MCF 10A (cell line): ENCODE measurements at regions of chr4 and their contacts with region 1.

Region 1: DNA sequence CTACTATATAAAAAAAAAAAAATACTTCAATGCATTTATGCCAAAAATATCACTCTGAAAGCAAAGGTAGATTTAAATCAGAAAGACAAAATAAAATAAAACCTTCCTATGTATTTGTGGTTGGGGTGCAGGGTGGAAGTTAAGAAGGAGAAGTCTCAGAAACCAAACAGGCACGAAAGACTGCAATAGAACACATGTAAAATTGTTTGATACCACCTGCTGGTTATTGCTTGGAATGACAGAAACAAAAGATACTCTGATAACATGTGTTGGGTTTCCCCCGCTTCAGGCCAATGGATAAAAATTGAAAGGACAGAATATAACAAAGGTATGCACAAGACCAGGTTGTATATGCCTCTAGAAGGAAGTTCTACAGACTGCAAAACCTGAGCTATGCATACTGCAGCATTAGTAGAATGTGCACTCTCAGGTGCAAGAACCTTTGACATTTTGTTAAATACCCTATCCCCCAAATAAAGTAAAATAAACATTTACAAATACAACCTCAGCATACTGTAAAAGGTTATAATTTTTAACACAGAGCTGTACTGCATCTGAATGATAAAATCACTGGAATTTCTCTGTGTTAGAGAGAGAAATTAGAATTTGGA is 118.8 kb downstream of the GABRA2 start:
- DNase-seq: peak; percentile 59
- H3K4me3 Mint-ChIP-seq: no peak overlapping the region
- H3K27ac Mint-ChIP-seq: no peak overlapping the region
- H3K4me1 Mint-ChIP-seq: no peaks in the 10 kb centered on the region
- H3K27me3 Mint-ChIP-seq: no peaks in the 10 kb centered on the region
- CTCF ChIP-seq: peak; percentile 58

Region 2: DNA sequence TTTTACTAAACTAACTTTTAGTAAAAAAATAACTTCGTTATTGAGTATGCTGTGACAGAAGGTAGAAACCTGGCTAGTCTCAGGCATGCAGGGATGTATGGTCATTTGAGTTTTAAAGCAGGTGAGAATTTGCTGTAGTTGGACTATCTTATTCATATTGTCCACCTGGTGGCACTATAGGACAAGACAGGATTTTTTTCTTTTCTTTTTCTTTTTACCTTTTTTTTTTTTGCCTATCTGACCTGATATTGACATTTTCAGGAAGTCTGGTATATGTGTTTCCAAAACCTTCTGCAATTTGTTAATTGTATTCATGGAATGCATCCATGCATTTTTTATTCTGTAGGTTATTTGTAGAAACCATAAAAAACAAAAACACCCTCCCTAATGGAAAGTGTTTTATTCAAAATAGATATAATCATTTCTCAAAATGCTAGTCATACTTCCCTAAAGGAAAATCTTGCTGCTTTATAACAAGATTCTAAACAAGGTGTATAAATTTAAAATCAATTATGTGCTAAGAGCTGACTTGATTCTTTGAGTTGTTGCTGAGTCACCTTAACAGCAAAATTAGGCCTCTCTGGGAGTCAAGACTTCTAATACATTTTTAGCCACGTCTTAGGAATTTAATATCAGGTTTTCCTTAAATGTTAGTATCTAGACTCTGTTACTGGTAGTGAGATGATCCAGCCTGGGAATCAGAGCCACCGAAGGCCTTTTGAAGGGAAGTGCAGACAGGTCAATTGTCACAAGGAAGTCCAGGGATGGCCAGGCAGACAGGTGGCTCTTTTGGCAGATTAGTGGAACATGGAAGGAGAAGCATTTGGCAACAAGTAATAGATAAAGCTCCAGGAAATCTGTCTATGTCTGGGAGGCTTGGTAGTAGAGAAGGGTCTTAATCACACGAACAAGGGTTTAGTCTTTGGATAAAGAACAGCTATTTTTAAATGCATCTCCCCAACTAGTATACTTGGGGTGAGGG is 1343.4 kb before region 1 on chr4:
- CTCF ChIA-PET with region 1: interaction called, 16 read pairs
- POLR2A ChIA-PET with region 1: no interaction called
- intact Hi-C with region 1: loop called (anchors 2 kb)
- DNase-seq: peak; percentile 66
- H3K4me3 Mint-ChIP-seq: no peak overlapping the region
- H3K27ac Mint-ChIP-seq: no peak overlapping the region
- H3K4me1 Mint-ChIP-seq: no peaks in the 10 kb centered on the region
- H3K27me3 Mint-ChIP-seq: no peaks in the 10 kb centered on the region
- CTCF ChIP-seq: peak; percentile 60

Region 3: DNA sequence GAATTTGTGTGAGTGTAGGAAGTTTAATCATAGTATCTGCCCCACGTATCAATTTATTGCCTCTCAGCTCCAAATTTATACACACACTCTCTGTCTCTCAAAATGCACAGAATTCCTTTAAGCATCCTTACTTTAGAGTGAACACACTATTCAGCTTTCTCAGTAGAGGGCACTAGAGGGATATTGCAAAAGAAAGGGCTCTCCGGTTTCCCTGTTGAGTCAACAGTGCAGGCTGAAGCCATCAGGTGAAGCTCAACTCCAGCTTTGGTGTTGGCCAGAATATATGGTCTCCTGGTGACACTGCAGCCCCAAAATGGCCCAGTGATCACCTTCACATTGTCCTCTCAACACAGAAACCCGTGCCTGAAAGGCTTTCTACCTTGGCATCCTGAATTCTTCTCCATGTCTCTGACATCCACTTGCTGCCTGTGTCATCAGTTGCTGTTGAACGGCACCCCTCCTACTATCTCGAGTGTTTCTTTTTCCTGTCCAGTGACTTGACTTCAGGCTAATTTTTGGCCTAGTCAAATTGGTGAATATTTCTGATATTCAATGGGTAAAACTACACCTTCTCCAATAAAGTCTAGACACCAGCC is 817.7 kb before region 1 on chr4:
- CTCF ChIA-PET with region 1: interaction called, 18 read pairs
- POLR2A ChIA-PET with region 1: no interaction called
- intact Hi-C with region 1: loop called (anchors 1 kb)
- DNase-seq: peak; percentile 72
- H3K4me3 Mint-ChIP-seq: no peak overlapping the region
- H3K27ac Mint-ChIP-seq: no peak overlapping the region
- H3K4me1 Mint-ChIP-seq: no peaks in the 10 kb centered on the region
- H3K27me3 Mint-ChIP-seq: no peaks in the 10 kb centered on the region
- CTCF ChIP-seq: peak; percentile 59

Region 4: GRCh38 chr4:45550766-45551366 is 720.2 kb before region 1 on chr4:
- CTCF ChIA-PET with region 1: interaction called, 33 read pairs
- POLR2A ChIA-PET with region 1: interaction called, 3 read pairs
- intact Hi-C with region 1: loop called (anchors 1 kb)
- DNase-seq: peak; percentile 32
- H3K4me3 Mint-ChIP-seq: no peak overlapping the region
- H3K27ac Mint-ChIP-seq: peak overlapping the region; percentile 20
- H3K4me1 Mint-ChIP-seq: peaks cover 4% of the 10 kb centered on the region
- H3K27me3 Mint-ChIP-seq: no peaks in the 10 kb centered on the region
- CTCF ChIP-seq: peak; percentile 32

Region 5: GRCh38 chr4:45693746-45694145 is 577.3 kb before region 1 on chr4:
- CTCF ChIA-PET with region 1: interaction called, 6 read pairs
- POLR2A ChIA-PET with region 1: interaction called, 3 read pairs
- intact Hi-C with region 1: loop called (anchors 2 kb)
- DNase-seq: peak; percentile 76
- H3K4me3 Mint-ChIP-seq: peak overlapping the region; percentile 26
- H3K27ac Mint-ChIP-seq: peak overlapping the region; percentile 86
- H3K4me1 Mint-ChIP-seq: peaks cover 7% of the 10 kb centered on the region
- H3K27me3 Mint-ChIP-seq: no peaks in the 10 kb centered on the region
- CTCF ChIP-seq: no peak

Region 6: GRCh38 chr4:46254788-46255187 is 16.3 kb before region 1 on chr4:
- CTCF ChIA-PET with region 1: interaction called, 18 read pairs
- POLR2A ChIA-PET with region 1: interaction called, 3 read pairs
- intact Hi-C with region 1: no loop called
- DNase-seq: peak; percentile 18
- H3K4me3 Mint-ChIP-seq: no peak overlapping the region
- H3K27ac Mint-ChIP-seq: no peak overlapping the region
- H3K4me1 Mint-ChIP-seq: peaks cover 12% of the 10 kb centered on the region
- H3K27me3 Mint-ChIP-seq: no peaks in the 10 kb centered on the region
- CTCF ChIP-seq: no peak

Region 7: GRCh38 chr4:46392421-46392820 is 121.3 kb after region 1 on chr4:
- CTCF ChIA-PET with region 1: no interaction called
- POLR2A ChIA-PET with region 1: no interaction called
- intact Hi-C with region 1: no loop called
- DNase-seq: peak; percentile 46
- H3K4me3 Mint-ChIP-seq: no peak overlapping the region
- H3K27ac Mint-ChIP-seq: no peak overlapping the region
- H3K4me1 Mint-ChIP-seq: peaks cover 19% of the 10 kb centered on the region
- H3K27me3 Mint-ChIP-seq: peaks cover 12% of the 10 kb centered on the region
- CTCF ChIP-seq: no peak